H1 (cell line): ENCODE measurements at regions of chr11 and their contacts with region 1.

Region 1: DNA sequence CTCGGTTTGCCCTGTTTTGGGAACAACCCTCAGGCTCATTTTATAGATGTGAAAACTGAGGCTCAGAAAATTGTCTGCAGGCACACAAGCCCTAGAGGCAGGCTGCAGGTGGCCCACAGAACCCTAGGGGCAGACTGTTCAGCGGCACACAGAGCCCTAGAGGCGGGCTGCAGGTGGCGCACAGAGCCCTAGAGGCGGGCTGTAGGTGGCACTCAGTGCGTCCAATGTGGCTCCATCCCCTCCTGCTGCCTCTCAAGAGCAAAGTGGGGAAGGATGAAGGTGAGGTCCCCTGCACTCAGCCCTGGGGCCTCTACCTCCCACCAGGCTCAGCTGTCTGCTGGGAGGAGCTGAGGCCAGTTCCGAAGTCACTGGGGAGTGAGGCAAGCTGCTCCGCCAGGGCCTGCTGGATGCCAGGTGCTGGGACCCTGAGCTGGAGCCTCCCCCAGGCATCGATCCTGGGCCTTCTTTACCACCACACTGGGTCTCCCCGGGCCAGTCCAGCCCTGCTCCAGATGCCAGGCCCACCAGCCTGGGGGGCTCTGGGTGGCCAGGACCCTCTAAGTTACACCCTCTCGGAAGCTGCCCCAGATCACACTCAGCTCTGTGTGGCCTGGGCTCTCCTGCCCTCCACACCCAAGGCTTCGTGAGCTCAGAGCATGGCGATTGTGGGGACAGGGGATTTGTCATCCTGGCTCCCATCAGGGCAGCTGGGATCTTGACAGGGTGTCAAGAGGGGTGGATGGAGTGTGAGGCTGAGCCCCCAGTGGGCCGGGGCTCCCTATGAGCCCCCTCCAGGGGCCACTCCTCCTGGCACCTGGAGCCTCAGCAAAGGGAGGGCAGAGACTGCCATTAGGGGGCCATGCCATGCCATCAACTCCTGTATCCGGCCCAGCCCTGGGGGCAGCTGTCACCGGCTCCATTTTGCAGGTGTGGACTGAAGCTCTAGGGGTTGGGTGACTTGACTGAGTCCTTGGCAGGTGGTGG is 2.1 kb downstream of the ACY3 start:
- DNase-seq: peak in 1 of 2 experiments; percentile 64
- H3K4me3 ChIP-seq: no peak overlapping the region
- H3K27ac ChIP-seq: no peak overlapping the region
- H3K4me1 ChIP-seq: peaks cover 0 to 9% (median 0%) of the 10 kb centered on the region in 4 experiments; a peak in 2 of 7 replicates
- H3K27me3 ChIP-seq: no peaks in the 10 kb centered on the region; a peak in 2 of 7 replicates
- CTCF ChIP-seq: peak in 2 of 3 experiments; percentile 73 to 98; a peak in 3 of 4 replicates
- EP300 ChIP-seq: no peak
- POLR2A ChIP-seq: no peak
- RAD21 ChIP-seq: peak; percentile 58 to 68

Region 2: GRCh38 chr11:67665541-67666362 is 17.3 kb after region 1 on chr11:
- CTCF ChIA-PET with region 1: interaction called, 74 read pairs
- POLR2A ChIA-PET with region 1: no interaction called
- DNase-seq: no peak
- H3K4me3 ChIP-seq: no peak overlapping the region
- H3K27ac ChIP-seq: no peak overlapping the region
- H3K4me1 ChIP-seq: no peaks in the 10 kb centered on the region
- H3K27me3 ChIP-seq: no peaks in the 10 kb centered on the region
- CTCF ChIP-seq: peak; percentile 14 to 27 (median 18); a peak in 3 of 4 replicates
- EP300 ChIP-seq: no peak
- POLR2A ChIP-seq: no peak
- RAD21 ChIP-seq: peak; percentile 24 to 47; a peak in 2 of 4 replicates

Region 3: DNA sequence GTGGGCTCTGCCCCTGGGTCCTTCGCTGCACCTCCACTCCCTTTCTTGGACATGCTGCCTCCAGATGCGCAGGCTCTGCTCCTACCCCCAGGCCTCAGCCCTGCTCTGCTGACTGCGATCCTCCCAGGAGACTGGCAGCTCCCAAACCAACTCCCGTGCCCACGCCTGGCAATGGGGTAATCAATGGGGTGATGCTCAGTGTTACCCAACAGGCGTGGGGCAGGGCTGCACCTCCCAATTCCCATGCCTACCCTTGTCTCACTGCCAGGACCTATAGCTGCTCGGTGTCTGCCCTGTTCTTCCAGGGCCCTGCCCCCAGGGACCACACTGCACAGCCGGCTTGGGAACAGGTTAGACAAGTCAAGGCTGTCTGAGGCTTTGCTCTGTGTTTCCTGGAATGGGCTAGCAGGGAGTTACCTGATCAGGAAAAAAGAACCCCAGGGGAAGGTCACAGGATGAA is 26.0 kb after region 1 on chr11 and contains the start of gene ALDH3B2:
- CTCF ChIA-PET with region 1: interaction called, 28 read pairs
- POLR2A ChIA-PET with region 1: interaction called, 4 read pairs
- DNase-seq: peak in 1 of 2 experiments; percentile 48
- H3K4me3 ChIP-seq: no peak within 1 kb of the TSS
- H3K27ac ChIP-seq: no peak within 1 kb of the TSS
- H3K4me1 ChIP-seq: peaks cover 0 to 5% (median 0%) of the 10 kb centered on the region in 4 experiments; a peak in 3 of 7 replicates
- H3K27me3 ChIP-seq: no peaks in the 10 kb centered on the region
- CTCF ChIP-seq: no peak
- EP300 ChIP-seq: no peak
- POLR2A ChIP-seq: no peak
- RAD21 ChIP-seq: no peak
- total RNA-seq, gene ALDH3B2: not detected in 2 replicates

Region 4: DNA sequence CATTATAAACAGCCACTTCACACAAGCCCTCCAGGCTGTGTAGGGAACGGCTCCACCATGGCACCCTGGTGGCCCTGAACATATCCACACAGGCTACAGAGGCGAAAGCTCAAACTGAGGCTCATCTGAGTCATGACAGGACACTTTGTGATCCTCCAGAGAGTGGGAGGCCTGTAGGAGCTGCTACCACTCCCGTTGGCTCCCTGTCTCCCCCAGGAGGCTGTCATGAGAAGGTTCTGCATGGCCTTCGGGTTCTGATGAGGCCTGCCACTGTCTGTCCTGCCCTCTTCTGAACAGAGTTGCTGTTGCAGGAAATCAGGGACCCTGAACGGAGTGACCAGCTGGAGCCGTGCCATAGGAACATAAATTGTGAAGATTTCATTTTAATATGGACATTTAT is 49.8 kb after region 1 on chr11:
- CTCF ChIA-PET with region 1: interaction called, 38 read pairs
- POLR2A ChIA-PET with region 1: no interaction called
- DNase-seq: peak in 1 of 2 experiments; percentile 44
- H3K4me3 ChIP-seq: no peak overlapping the region
- H3K27ac ChIP-seq: no peak overlapping the region
- H3K4me1 ChIP-seq: no peaks in the 10 kb centered on the region
- H3K27me3 ChIP-seq: no peaks in the 10 kb centered on the region; a peak in 2 of 7 replicates
- CTCF ChIP-seq: peak; percentile 62 to 87 (median 72)
- EP300 ChIP-seq: no peak
- POLR2A ChIP-seq: no peak
- RAD21 ChIP-seq: peak; percentile 35 to 53; a peak in 2 of 4 replicates